HCT116 (cell line): ENCODE measurements at regions of chr11 and their contacts with region 1.

Region 1: GRCh38 chr11:6298605-6299004 is 21.7 kb downstream of the CAVIN3 start:
- DNase-seq: peak; percentile 51
- ATAC-seq: peak; percentile 100
- H3K4me3 ChIP-seq: no peak overlapping the region
- H3K27ac ChIP-seq: no peak overlapping the region
- H3K4me1 ChIP-seq: no peaks in the 10 kb centered on the region
- H3K27me3 ChIP-seq: no peaks in the 10 kb centered on the region
- CTCF ChIP-seq: peak; percentile 97 to 100 (median 99)
- POLR2A ChIP-seq: no peak
- RAD21 ChIP-seq: peak; percentile 70

Region 2: DNA sequence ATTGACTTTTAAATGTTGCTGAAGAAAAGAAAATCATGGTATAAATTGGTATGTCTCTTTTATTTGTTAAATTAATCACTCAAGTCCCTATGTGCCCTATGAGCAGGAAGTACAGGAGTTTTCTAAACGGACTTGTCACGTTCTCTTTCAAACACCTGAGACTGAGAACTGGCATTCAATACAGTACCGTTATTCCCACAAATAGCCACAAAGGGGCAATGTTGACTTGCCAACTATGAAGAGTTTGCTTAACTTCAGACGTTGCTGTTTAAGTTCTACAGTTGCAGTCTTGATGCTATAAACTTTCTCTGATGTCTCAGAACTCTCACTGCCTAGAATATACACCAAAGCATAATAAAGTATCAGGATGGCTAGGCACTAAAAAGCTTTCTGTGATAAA is 275.6 kb before region 1 on chr11:
- CTCF ChIA-PET with region 1: interaction called, 5 read pairs
- POLR2A ChIA-PET with region 1: no interaction called
- RAD21 ChIA-PET with region 1: no interaction called
- intact Hi-C with region 1: loop called (anchors 1 kb)
- DNase-seq: peak; percentile 33
- ATAC-seq: peak; percentile 77
- H3K4me3 ChIP-seq: no peak overlapping the region
- H3K27ac ChIP-seq: no peak overlapping the region
- H3K4me1 ChIP-seq: no peaks in the 10 kb centered on the region
- H3K27me3 ChIP-seq: peaks cover 62% of the 10 kb centered on the region
- CTCF ChIP-seq: peak; percentile 32 to 55 (median 43); a peak in 4 of 6 replicates
- POLR2A ChIP-seq: no peak
- RAD21 ChIP-seq: peak; percentile 68

Region 3: DNA sequence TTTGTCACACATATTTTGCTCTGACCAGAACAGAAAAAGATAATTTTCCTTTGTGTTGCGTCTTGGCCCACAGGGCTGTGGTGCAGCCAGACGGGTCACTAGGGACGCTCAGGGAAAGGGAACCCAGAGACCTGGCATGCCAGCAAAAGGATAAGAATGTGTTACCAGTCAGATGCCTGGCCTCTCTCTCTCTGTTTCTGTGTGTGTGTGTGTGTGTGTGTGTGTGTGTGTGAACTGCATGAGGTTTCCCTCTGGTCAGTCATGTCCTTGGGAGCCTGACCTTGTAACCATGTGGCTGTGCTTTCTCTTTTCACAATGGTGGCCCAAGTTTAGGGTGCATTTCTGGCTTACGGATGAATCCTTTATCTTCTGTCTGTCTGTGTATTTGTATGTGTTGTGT is 13.6 kb before region 1 on chr11:
- CTCF ChIA-PET with region 1: interaction called, 19 read pairs
- POLR2A ChIA-PET with region 1: interaction called, 4 read pairs
- RAD21 ChIA-PET with region 1: interaction called in 1 of 2 experiments, 6 read pairs
- intact Hi-C with region 1: no loop called
- DNase-seq: no peak
- ATAC-seq: no peak
- H3K4me3 ChIP-seq: no peak overlapping the region
- H3K27ac ChIP-seq: no peak overlapping the region
- H3K4me1 ChIP-seq: peaks cover 0 to 10% of the 10 kb centered on the region in 2 experiments; a peak in 3 of 4 replicates
- H3K27me3 ChIP-seq: peaks cover 43% of the 10 kb centered on the region
- CTCF ChIP-seq: no peak
- POLR2A ChIP-seq: no peak
- RAD21 ChIP-seq: no peak

Region 4: DNA sequence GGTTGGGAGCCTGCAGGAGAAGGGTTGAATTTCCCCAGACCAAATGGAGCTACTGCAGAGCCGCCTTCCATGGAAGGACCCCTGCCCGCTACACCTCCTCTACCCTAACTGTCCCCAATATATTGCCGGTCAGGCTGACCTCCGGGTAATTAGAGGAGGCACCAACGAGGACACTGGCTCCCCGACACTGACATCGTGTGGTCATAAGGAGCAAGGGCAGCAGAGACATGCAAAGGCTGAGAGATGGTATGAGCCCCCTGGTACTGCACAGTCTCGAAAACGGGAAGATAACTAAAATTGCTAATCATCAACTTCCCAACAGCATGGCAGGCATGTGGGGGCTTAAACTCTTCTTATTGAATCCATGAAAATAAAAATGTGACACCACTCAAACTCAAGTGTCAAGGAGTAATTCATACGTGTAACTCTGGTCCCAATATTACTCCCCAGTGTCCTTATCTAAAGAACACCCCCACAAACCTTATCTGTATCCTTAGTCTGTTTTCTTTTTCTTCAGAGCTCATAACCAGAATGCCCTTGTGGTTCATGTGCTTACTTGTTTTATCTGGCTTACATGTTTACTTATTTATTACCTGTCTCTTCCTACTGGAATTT is 17.3 kb after region 1 on chr11:
- CTCF ChIA-PET with region 1: interaction called, 13 read pairs
- POLR2A ChIA-PET with region 1: interaction called, 3 read pairs
- RAD21 ChIA-PET with region 1: no interaction called
- intact Hi-C with region 1: no loop called
- DNase-seq: peak; percentile 41
- ATAC-seq: peak; percentile 69
- H3K4me3 ChIP-seq: no peak overlapping the region
- H3K27ac ChIP-seq: no peak overlapping the region
- H3K4me1 ChIP-seq: peaks cover 14 to 27% of the 10 kb centered on the region in 2 experiments
- H3K27me3 ChIP-seq: no peaks in the 10 kb centered on the region
- CTCF ChIP-seq: peak; percentile 84 to 95 (median 93); a peak in 5 of 6 replicates
- POLR2A ChIP-seq: no peak
- RAD21 ChIP-seq: peak; percentile 81

Region 5: GRCh38 chr11:6427516-6427915 is 128.9 kb after region 1 on chr11:
- CTCF ChIA-PET with region 1: no interaction called
- POLR2A ChIA-PET with region 1: no interaction called
- RAD21 ChIA-PET with region 1: no interaction called
- intact Hi-C with region 1: no loop called
- DNase-seq: no peak
- ATAC-seq: no peak
- H3K4me3 ChIP-seq: no peak overlapping the region
- H3K27ac ChIP-seq: no peak overlapping the region
- H3K4me1 ChIP-seq: peaks cover 11 to 14% of the 10 kb centered on the region in 2 experiments
- H3K27me3 ChIP-seq: peaks cover 12% of the 10 kb centered on the region
- CTCF ChIP-seq: no peak
- POLR2A ChIP-seq: no peak
- RAD21 ChIP-seq: no peak

Region 6: GRCh38 chr11:6646918-6647679 is 348.5 kb after region 1 on chr11:
- CTCF ChIA-PET with region 1: no interaction called
- POLR2A ChIA-PET with region 1: no interaction called
- RAD21 ChIA-PET with region 1: no interaction called
- intact Hi-C with region 1: no loop called
- DNase-seq: no peak
- ATAC-seq: no peak
- H3K4me3 ChIP-seq: no peak overlapping the region
- H3K27ac ChIP-seq: no peak overlapping the region
- H3K4me1 ChIP-seq: peaks cover 0 to 7% of the 10 kb centered on the region in 2 experiments; a peak in 2 of 4 replicates
- H3K27me3 ChIP-seq: peaks cover 32% of the 10 kb centered on the region; the same call in 1 of the 2 replicates
- CTCF ChIP-seq: no peak
- POLR2A ChIP-seq: no peak
- RAD21 ChIP-seq: no peak